A673 (cell line): ENCODE measurements at regions of chr9 and their contacts with region 1.

Region 1: GRCh38 chr9:121545875-121546423 is 46.3 kb upstream of the GGTA1 start:
- DNase-seq: peak; percentile 90
- H3K4me3 ChIP-seq: no peak overlapping the region
- H3K27ac ChIP-seq: no peak overlapping the region
- H3K4me1 ChIP-seq: peaks cover 4% of the 10 kb centered on the region
- H3K27me3 ChIP-seq: no peaks in the 10 kb centered on the region
- CTCF ChIP-seq: peak; percentile 97

Region 2: GRCh38 chr9:120212153-120212852 is 1333.6 kb before region 1 on chr9:
- CTCF ChIA-PET with region 1: no interaction called
- POLR2A ChIA-PET with region 1: no interaction called
- intact Hi-C with region 1: no loop called
- DNase-seq: no peak
- H3K4me3 ChIP-seq: no peak overlapping the region
- H3K27ac ChIP-seq: no peak overlapping the region
- H3K4me1 ChIP-seq: no peaks in the 10 kb centered on the region
- H3K27me3 ChIP-seq: peaks cover 27% of the 10 kb centered on the region
- CTCF ChIP-seq: no peak

Region 3: DNA sequence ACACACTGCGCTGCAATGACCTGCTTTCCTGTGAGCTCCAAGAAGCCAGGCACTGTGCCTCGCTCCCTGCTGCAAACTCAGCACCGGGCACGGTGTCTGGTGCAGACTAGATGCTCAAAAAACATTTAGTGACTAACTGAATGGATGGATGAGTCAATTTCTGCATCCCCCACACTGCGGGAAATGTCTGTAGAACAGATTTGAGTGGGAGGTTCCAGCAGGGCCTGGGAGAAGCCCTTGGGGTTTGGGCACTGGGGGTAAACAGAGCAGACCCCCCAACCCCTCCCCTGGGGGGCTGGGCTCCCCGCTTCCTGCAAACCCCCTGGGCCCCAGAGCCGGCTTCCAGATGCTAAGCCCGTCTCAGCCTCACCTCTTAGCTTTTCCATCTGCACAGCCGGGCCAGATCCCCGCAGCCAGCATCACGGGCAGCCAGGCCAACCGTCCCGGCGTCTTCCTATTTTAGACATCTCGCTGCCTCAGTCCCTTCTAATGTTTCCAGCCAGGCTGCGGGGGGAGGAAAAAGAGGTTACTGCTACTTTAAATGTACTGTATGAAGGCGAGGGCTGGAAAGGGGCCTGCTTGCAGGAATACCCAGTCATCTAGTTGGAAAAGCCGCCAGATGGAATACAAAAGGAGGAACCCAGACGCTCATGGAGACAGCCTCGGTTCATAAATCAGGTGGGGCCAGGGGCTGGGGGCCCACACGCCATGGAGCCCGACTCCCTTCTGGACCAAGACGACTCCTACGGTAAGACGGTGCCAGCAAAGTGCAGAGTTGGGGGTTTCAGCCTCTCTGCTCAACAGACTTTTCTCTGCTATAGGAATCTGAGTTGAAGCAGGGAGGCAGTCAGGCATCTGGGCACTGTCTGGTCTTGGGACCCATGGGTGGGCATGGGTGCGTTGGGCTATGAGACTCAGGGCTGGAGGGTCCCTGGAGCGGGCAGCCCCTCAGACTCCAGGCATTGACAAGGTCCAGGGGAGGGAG is 20.8 kb after region 1 on chr9:
- CTCF ChIA-PET with region 1: interaction called, 12 read pairs
- POLR2A ChIA-PET with region 1: no interaction called
- intact Hi-C with region 1: no loop called
- DNase-seq: no peak
- H3K4me3 ChIP-seq: no peak overlapping the region
- H3K27ac ChIP-seq: no peak overlapping the region
- H3K4me1 ChIP-seq: no peaks in the 10 kb centered on the region
- H3K27me3 ChIP-seq: no peaks in the 10 kb centered on the region
- CTCF ChIP-seq: no peak

Region 4: GRCh38 chr9:121640076-121640475 is 94.1 kb after region 1 on chr9:
- CTCF ChIA-PET with region 1: interaction called, 11 read pairs
- POLR2A ChIA-PET with region 1: no interaction called
- intact Hi-C with region 1: no loop called
- DNase-seq: peak; percentile 72
- H3K4me3 ChIP-seq: no peak overlapping the region
- H3K27ac ChIP-seq: no peak overlapping the region
- H3K4me1 ChIP-seq: no peaks in the 10 kb centered on the region
- H3K27me3 ChIP-seq: no peaks in the 10 kb centered on the region
- CTCF ChIP-seq: peak; percentile 75

Region 5: GRCh38 chr9:121698627-121699570 is 152.9 kb after region 1 on chr9:
- CTCF ChIA-PET with region 1: no interaction called
- POLR2A ChIA-PET with region 1: no interaction called
- intact Hi-C with region 1: loop called (anchors 5 kb)
- DNase-seq: peak; percentile 69
- H3K4me3 ChIP-seq: peak overlapping the region; percentile 55
- H3K27ac ChIP-seq: no peak overlapping the region
- H3K4me1 ChIP-seq: peaks cover 10% of the 10 kb centered on the region
- H3K27me3 ChIP-seq: no peaks in the 10 kb centered on the region
- CTCF ChIP-seq: no peak

Region 6: GRCh38 chr9:122125158-122125508 is 579.2 kb after region 1 on chr9:
- CTCF ChIA-PET with region 1: interaction called, 4 read pairs
- POLR2A ChIA-PET with region 1: no interaction called
- intact Hi-C with region 1: loop called (anchors 1 kb)
- DNase-seq: peak; percentile 79
- H3K4me3 ChIP-seq: no peak overlapping the region
- H3K27ac ChIP-seq: no peak overlapping the region
- H3K4me1 ChIP-seq: peaks cover 11% of the 10 kb centered on the region
- H3K27me3 ChIP-seq: peaks cover 11% of the 10 kb centered on the region
- CTCF ChIP-seq: peak; percentile 92